Activated CD4-positive, alpha-beta T cell treated with anti-CD3 and anti-CD28 coated beads, Interleukin-2, amount 10 ng/mL, durations not matched to agents 24 days and 14 days (primary cell): ENCODE measurements at regions of chr14 and their contacts with region 1.

Region 1: DNA sequence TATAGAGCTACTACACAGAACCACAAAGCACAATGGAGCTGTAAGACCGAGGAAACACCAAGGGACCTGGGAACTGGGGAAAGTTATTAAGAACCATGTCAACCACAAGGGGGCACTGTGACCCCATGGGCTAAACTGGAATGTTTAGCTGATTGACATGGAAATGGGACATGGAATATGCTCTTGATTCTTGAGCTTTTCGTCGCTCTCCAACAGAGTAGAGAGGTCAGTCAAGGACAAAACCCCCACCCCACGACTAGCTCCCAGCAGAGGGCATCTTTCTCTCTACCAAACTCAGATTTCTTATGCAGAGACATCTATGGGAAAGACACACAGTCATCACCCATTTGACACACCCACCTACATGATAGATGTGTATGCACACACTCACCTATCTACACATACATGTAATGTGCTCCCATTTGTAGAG is 10.1 kb downstream of the NDRG2 start:
- DNase-seq: peak; percentile 94
- H3K4me3 Mint-ChIP-seq: no peak overlapping the region
- H3K27ac Mint-ChIP-seq: no peak overlapping the region
- H3K4me1 Mint-ChIP-seq: peaks cover 2% of the 10 kb centered on the region
- H3K27me3 Mint-ChIP-seq: peaks cover 30% of the 10 kb centered on the region

Region 2: GRCh38 chr14:20998664-20999366 is 16.0 kb before region 1 on chr14 and contains the start of gene SLC39A2:
- intact Hi-C with region 1: no loop called
- DNase-seq: no peak
- H3K4me3 Mint-ChIP-seq: no peak within 1 kb of the TSS
- H3K27ac Mint-ChIP-seq: no peak within 1 kb of the TSS
- H3K4me1 Mint-ChIP-seq: peaks cover 2% of the 10 kb centered on the region
- H3K27me3 Mint-ChIP-seq: no peaks in the 10 kb centered on the region
- total RNA-seq, gene SLC39A2: 0.33 TPM in 1 of 2 replicates, not detected in the other

Region 3: GRCh38 chr14:21039585-21040369 is 25.0 kb after region 1 on chr14:
- intact Hi-C with region 1: loop called (anchors 1 kb)
- DNase-seq: peak; percentile 72
- H3K4me3 Mint-ChIP-seq: no peak overlapping the region
- H3K27ac Mint-ChIP-seq: no peak overlapping the region
- H3K4me1 Mint-ChIP-seq: no peaks in the 10 kb centered on the region
- H3K27me3 Mint-ChIP-seq: peaks cover 29% of the 10 kb centered on the region

Region 4: GRCh38 chr14:21092273-21093011 is 77.7 kb after region 1 on chr14:
- intact Hi-C with region 1: loop called (anchors 1 kb)
- DNase-seq: peak; percentile 98
- H3K4me3 Mint-ChIP-seq: no peak overlapping the region
- H3K27ac Mint-ChIP-seq: no peak overlapping the region
- H3K4me1 Mint-ChIP-seq: peaks cover 19% of the 10 kb centered on the region
- H3K27me3 Mint-ChIP-seq: peaks cover 10% of the 10 kb centered on the region